ENCODE measurements at regions of chr16 and their contacts with region 1.

Region 1: GRCh38 chr16:68328151-68328859 is 17.5 kb downstream of the PRMT7 start:
- DNase-seq: peak; percentile 67 to 87 (median 76)
- ATAC-seq: peak; percentile 97 to 99 (median 98)
- H3K4me3 ChIP-seq: no peak overlapping the region
- H3K27ac ChIP-seq: no peak overlapping the region
- H3K4me1 ChIP-seq: no peaks in the 10 kb centered on the region
- H3K27me3 ChIP-seq: no peaks in the 10 kb centered on the region
- CTCF ChIP-seq: peak; percentile 74 to 89 (median 84)

Region 2: DNA sequence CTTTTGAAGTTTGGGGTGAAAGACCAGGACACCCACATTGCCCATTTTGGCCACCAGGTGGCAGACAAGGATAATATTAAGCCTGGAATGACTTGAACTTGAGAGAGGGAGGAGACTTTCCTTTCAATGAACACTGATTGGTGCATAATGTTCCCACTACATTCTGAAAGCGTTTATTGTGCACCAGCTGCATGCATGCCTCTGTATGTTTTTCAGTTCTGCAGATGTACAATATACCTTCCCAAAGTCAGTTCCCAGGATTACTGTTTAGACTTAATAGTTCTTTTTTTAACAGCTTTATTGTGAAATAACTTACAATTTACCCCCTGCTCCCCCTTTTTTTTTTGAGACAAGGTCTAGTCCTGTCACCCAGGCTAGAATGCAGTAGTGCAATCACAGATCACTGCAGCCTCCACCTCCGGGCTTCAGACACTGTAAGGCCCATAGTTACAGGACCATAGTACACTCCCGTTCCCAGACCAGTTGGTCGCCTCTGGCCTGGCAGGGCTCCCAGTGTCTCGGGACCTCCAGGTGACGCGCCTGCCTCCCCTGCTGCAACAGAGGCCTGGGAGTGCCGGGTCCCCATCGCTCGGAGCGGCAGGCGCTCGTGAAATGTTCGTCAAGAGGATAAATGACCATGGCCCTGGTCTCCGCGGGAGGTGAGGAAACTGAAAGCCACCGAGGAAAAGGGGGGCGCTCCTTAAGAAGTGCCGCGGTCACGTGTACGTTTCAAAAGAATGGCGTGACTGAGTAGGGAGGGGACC is 1380.8 kb before region 1 on chr16:
- intact Hi-C with region 1: no loop called
- DNase-seq: peak; percentile 51 to 89 (median 76)
- ATAC-seq: peak; percentile 83 to 94 (median 90)
- H3K4me3 ChIP-seq: peak overlapping the region; percentile 15 to 52 (median 36)
- H3K27ac ChIP-seq: no peak overlapping the region
- H3K4me1 ChIP-seq: peaks cover 0 to 5% (median 0%) of the 10 kb centered on the region in 3 donors
- H3K27me3 ChIP-seq: no peaks in the 10 kb centered on the region
- CTCF ChIP-seq: peak; percentile 74 to 95 (median 88)

Region 3: GRCh38 chr16:68257906-68258800 is 70.2 kb before region 1 on chr16:
- intact Hi-C with region 1: loop called in 2 of 3 experiments (anchors 5 kb)
- DNase-seq: no peak
- ATAC-seq: peak in 3 of 4 donors; percentile 11 to 73 (median 53)
- H3K4me3 ChIP-seq: no peak overlapping the region
- H3K27ac ChIP-seq: no peak overlapping the region
- H3K4me1 ChIP-seq: no peaks in the 10 kb centered on the region
- H3K27me3 ChIP-seq: no peaks in the 10 kb centered on the region
- CTCF ChIP-seq: no peak

Region 4: GRCh38 chr16:68264128-68265077 is 63.9 kb before region 1 on chr16 and contains the start of gene SLC7A6:
- intact Hi-C with region 1: loop called in 2 of 3 experiments (anchors 5 kb)
- DNase-seq: peak; percentile 52 to 89 (median 72)
- ATAC-seq: peak; percentile 79 to 88 (median 82)
- H3K4me3 ChIP-seq: peak within 1 kb of the TSS; percentile 72 to 89 (median 82)
- H3K27ac ChIP-seq: peak within 1 kb of the TSS; percentile 36 to 80 (median 66)
- H3K4me1 ChIP-seq: peaks cover 0 to 7% (median 4%) of the 10 kb centered on the region in 3 donors
- H3K27me3 ChIP-seq: no peaks in the 10 kb centered on the region
- CTCF ChIP-seq: peak in 3 of 4 donors; percentile 44 to 76 (median 71)
- total RNA-seq, gene SLC7A6: 4.3 to 8.7 (median 6.0) TPM

Region 5: GRCh38 chr16:68396481-68396880 is 68.2 kb after region 1 on chr16:
- intact Hi-C with region 1: no loop called
- DNase-seq: peak in 4 of 6 donors; percentile 63 to 81 (median 74)
- ATAC-seq: peak; percentile 92 to 95 (median 94)
- H3K4me3 ChIP-seq: no peak overlapping the region
- H3K27ac ChIP-seq: no peak overlapping the region
- H3K4me1 ChIP-seq: no peaks in the 10 kb centered on the region
- H3K27me3 ChIP-seq: no peaks in the 10 kb centered on the region
- CTCF ChIP-seq: peak; percentile 53 to 74 (median 71)

Region 6: GRCh38 chr16:68617734-68618133 is 289.4 kb after region 1 on chr16:
- intact Hi-C with region 1: no loop called
- DNase-seq: no peak
- ATAC-seq: no peak
- H3K4me3 ChIP-seq: no peak overlapping the region
- H3K27ac ChIP-seq: no peak overlapping the region
- H3K4me1 ChIP-seq: no peaks in the 10 kb centered on the region
- H3K27me3 ChIP-seq: no peaks in the 10 kb centered on the region
- CTCF ChIP-seq: no peak

Measured in pancreas (tissue), 10 donors.